Activated naive CD4-positive, alpha-beta T cell treated with anti-CD3 and anti-CD28 coated beads for 36 hours (primary cell): ENCODE measurements at regions of chr1 and their contacts with region 1.

Region 1: GRCh38 chr1:230104395-230105244 is 37.6 kb downstream of the GALNT2 start:
- DNase-seq: peak; percentile 97
- H3K4me3 Mint-ChIP-seq: peak overlapping the region; percentile 56
- H3K27ac Mint-ChIP-seq: peak overlapping the region; percentile 89
- H3K4me1 Mint-ChIP-seq: peaks cover 86% of the 10 kb centered on the region
- H3K27me3 Mint-ChIP-seq: no peaks in the 10 kb centered on the region

Region 2: GRCh38 chr1:229558571-229559335 is 545.9 kb before region 1 on chr1 and contains the start of gene ABCB10:
- CTCF ChIA-PET with region 1: no interaction called
- intact Hi-C with region 1: loop called (anchors 5 kb)
- DNase-seq: peak; percentile 92
- H3K4me3 Mint-ChIP-seq: peak within 1 kb of the TSS; percentile 88
- H3K27ac Mint-ChIP-seq: peak within 1 kb of the TSS; percentile 79
- H3K4me1 Mint-ChIP-seq: peaks cover 27% of the 10 kb centered on the region
- H3K27me3 Mint-ChIP-seq: no peaks in the 10 kb centered on the region
- total RNA-seq, gene ABCB10: 18.9 to 19.1 TPM

Region 3: DNA sequence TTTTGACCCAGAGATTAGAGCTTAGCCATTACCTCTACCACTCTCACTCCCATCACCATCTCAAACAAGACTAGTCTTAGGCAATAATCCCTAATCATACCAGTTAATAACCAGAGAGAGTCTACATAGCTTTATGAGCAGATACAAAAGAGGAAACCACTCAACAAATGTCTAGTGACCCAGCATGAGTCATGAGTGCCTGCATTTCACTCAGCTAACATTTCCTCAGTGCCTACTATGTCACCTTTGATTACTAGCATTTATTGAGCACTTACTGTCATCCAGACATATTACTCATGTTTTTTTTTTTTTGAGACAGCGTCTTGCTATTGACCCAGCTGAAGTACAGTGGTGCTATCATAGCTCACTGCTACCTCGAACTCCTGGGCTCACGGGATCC is 73.5 kb before region 1 on chr1:
- CTCF ChIA-PET with region 1: interaction called, 6 read pairs
- intact Hi-C with region 1: loop called (anchors 1 kb)
- DNase-seq: peak; percentile 48
- H3K4me3 Mint-ChIP-seq: no peak overlapping the region
- H3K27ac Mint-ChIP-seq: peak overlapping the region; percentile 85
- H3K4me1 Mint-ChIP-seq: peaks cover 29% of the 10 kb centered on the region
- H3K27me3 Mint-ChIP-seq: no peaks in the 10 kb centered on the region

Region 4: GRCh38 chr1:230066466-230067404 is 37.9 kb before region 1 on chr1 and contains the start of gene GALNT2:
- CTCF ChIA-PET with region 1: interaction called, 3 read pairs
- intact Hi-C with region 1: loop called (anchors 1 kb)
- DNase-seq: peak; percentile 89
- H3K4me3 Mint-ChIP-seq: peak within 1 kb of the TSS; percentile 88
- H3K27ac Mint-ChIP-seq: peak within 1 kb of the TSS; percentile 83
- H3K4me1 Mint-ChIP-seq: peaks cover 44% of the 10 kb centered on the region
- H3K27me3 Mint-ChIP-seq: no peaks in the 10 kb centered on the region
- total RNA-seq, gene GALNT2: 59.8 to 62.4 TPM

Region 5: DNA sequence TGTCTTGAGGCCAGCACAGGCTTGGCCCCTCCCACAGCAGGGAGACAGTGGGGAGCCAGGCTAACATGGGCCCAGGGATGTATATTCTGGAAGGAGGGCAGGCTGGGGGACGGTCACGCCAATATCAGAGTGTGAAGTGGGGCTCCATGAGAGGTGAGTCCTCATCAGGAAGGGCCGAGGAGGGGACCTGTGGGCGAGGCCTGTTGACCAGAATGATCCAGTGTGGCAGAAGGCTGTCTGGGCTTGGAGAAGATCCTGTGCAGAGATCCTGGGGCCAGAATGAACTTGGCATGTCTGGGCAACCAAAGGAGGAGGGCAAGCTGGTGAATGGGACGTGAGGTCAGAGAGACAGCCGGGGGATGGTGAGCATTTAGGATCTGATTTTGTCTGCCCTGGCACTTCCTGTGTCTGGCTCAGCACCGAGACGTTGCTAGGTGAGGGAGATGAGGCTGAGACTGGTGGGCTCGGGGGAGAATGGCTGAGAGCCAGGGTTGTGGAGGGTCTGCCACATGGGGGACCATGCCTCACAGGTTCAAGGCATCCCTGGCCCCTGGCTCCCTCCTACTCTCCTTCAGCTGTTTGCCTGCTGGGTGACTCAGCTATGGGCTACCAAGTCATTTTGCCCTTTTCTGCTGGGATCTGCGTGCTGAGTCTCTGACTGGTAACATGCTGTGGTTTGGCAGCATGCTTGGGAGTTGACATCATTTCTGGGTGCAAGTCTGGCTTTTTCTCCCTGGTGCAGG is 20.3 kb before region 1 on chr1:
- CTCF ChIA-PET with region 1: interaction called, 15 read pairs
- intact Hi-C with region 1: loop called (anchors 1 kb)
- DNase-seq: peak; percentile 91
- H3K4me3 Mint-ChIP-seq: peak overlapping the region; percentile 39
- H3K27ac Mint-ChIP-seq: peak overlapping the region; percentile 82
- H3K4me1 Mint-ChIP-seq: peaks cover 68% of the 10 kb centered on the region
- H3K27me3 Mint-ChIP-seq: no peaks in the 10 kb centered on the region

Region 6: DNA sequence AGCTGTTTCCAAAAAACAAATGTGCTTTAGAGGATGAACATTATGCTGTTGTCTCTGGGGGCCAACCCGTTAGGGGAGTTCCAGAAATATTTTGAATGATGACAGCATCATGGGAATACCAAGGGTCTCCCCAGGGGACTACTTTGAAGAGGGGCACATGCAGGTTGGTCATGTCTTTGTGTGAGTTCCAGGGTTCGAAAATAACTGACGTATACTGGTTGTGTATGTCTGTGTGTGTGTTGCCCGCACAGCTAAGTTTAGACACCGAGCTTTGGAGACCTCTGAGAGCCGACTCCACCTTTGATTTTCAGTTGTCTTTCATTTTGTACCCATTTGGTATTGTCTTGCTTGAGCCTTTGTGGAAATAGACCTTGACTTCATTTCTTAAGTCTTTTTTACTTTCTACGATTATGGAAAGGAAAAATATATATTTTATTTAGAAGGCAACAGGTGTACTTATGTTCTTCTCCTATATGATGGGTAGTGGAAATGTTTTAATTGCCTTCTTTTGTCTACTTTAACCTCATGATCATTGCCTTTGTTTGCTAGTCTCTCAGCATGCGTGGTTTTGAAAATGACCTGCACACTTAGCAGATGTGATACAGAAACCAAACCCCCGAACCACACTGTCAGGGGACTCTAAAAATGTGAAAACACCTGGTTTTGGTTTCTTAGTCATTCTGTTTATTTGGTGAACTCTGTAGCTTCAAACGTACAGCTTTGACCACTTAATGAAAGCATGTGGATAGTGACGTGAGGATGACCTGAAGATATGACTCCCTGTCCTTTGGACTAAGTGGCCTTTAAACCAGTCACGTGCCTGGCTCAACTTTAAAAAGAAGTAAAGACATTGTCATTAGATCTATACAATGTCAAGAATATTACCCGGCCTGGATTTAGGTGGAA is 18.9 kb after region 1 on chr1:
- CTCF ChIA-PET with region 1: interaction called, 7 read pairs
- intact Hi-C with region 1: loop called (anchors 1 kb)
- DNase-seq: peak; percentile 63
- H3K4me3 Mint-ChIP-seq: no peak overlapping the region
- H3K27ac Mint-ChIP-seq: no peak overlapping the region
- H3K4me1 Mint-ChIP-seq: peaks cover 73% of the 10 kb centered on the region
- H3K27me3 Mint-ChIP-seq: no peaks in the 10 kb centered on the region

Region 7: DNA sequence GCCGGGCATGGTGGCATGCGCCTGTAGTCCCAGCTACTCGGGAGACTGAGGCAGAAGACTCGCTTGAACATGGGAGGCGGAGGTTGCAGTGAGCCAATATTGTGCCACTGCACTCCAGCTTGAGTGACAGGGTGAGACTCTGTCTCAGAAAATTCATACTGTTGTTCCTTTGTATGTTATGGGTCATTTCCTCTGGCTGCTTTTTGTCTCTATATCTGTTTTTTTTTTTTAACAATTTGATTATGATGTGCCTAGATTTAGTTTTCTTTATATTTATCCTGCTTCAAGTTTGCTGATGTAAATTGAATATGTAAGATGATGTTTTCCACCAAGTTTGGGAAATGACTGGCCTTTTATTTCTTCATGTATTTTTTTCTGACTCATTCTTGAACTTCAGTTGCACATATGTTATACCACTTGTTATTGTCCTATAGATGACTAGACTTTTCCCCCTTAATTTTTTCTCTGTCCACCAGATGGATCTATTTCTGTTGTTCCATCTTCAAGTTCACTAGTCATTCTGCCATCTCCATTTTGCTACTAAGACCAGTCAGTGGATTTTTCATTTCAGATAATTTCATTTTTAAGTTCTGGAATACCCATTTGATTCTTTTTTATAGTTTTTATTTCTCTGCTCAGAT is 135.9 kb after region 1 on chr1:
- CTCF ChIA-PET with region 1: no interaction called
- intact Hi-C with region 1: loop called (anchors 1 kb)
- DNase-seq: no peak
- H3K4me3 Mint-ChIP-seq: no peak overlapping the region
- H3K27ac Mint-ChIP-seq: peak overlapping the region; percentile 84
- H3K4me1 Mint-ChIP-seq: peaks cover 20% of the 10 kb centered on the region
- H3K27me3 Mint-ChIP-seq: no peaks in the 10 kb centered on the region